ENCODE measurements at regions of chr16 and their contacts with region 1.

Region 1: GRCh38 chr16:67561824-67562525 is 351 bp upstream of the CTCF start:
- DNase-seq: peak; percentile 98
- H3K4me3 Mint-ChIP-seq: peak overlapping the region; percentile 88
- H3K27ac Mint-ChIP-seq: peak overlapping the region; percentile 94
- H3K4me1 Mint-ChIP-seq: peaks cover 40% of the 10 kb centered on the region
- H3K27me3 Mint-ChIP-seq: no peaks in the 10 kb centered on the region

Region 2: DNA sequence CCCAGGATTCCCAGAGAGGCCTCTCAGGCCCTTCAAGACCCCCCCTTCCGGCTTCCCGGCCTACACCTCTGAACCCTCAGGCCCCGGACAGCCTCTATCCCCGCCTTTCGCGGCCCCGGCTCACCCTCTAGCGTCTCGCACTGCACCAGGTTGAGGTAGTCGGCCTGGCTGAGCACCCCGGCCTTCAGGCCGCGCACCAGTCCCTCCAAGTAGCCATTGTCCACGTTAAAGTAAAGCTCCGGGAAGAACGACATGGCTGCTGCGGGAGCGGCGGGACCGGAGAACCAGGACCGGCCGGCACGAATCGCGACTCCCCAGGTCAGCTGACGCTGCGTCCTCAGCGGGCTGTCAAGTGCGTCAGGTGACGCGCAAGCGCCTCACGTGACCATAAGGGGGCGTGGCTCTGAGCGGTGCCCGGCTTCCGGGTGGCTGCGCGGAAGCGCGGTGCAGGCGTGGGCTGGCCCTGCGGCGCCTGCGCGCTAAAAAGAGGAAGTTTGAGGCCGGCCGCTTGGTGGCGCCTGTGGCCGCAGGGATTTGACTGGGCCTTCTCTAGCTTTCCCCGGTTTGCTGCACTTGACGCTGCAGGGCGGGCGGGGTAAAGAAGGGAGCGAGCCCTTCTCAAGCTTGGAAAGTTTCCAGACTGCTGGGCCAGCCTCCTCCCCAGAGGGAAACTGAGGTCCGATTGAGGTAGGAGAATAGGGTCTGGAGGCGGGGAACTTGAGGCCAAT is 81.0 kb before region 1 on chr16 and contains the start of gene ATP6V0D1:
- intact Hi-C with region 1: loop called (anchors 1 kb)
- DNase-seq: peak; percentile 99
- H3K4me3 Mint-ChIP-seq: peak within 1 kb of the TSS; percentile 89
- H3K27ac Mint-ChIP-seq: peak within 1 kb of the TSS; percentile 97
- H3K4me1 Mint-ChIP-seq: peaks cover 17% of the 10 kb centered on the region
- H3K27me3 Mint-ChIP-seq: no peaks in the 10 kb centered on the region
- total RNA-seq, gene ATP6V0D1: 37.7 and 41.5 TPM in 2 replicates

Region 3: GRCh38 chr16:67595033-67595355 is 33.0 kb after region 1 on chr16:
- intact Hi-C with region 1: loop called (anchors 5 kb)
- DNase-seq: no peak
- H3K4me3 Mint-ChIP-seq: no peak overlapping the region
- H3K27ac Mint-ChIP-seq: peak overlapping the region; percentile 61
- H3K4me1 Mint-ChIP-seq: peaks cover 31% of the 10 kb centered on the region
- H3K27me3 Mint-ChIP-seq: no peaks in the 10 kb centered on the region

Region 4: GRCh38 chr16:67660564-67661028 is 98.6 kb after region 1 on chr16 and contains the start of gene PARD6A:
- intact Hi-C with region 1: loop called (anchors 1 kb)
- DNase-seq: peak; percentile 96
- H3K4me3 Mint-ChIP-seq: peak within 1 kb of the TSS; percentile 92
- H3K27ac Mint-ChIP-seq: peak within 1 kb of the TSS; percentile 97
- H3K4me1 Mint-ChIP-seq: peaks cover 20% of the 10 kb centered on the region
- H3K27me3 Mint-ChIP-seq: no peaks in the 10 kb centered on the region
- total RNA-seq, gene PARD6A: 13.4 and 16.1 TPM in 2 replicates

Region 5: DNA sequence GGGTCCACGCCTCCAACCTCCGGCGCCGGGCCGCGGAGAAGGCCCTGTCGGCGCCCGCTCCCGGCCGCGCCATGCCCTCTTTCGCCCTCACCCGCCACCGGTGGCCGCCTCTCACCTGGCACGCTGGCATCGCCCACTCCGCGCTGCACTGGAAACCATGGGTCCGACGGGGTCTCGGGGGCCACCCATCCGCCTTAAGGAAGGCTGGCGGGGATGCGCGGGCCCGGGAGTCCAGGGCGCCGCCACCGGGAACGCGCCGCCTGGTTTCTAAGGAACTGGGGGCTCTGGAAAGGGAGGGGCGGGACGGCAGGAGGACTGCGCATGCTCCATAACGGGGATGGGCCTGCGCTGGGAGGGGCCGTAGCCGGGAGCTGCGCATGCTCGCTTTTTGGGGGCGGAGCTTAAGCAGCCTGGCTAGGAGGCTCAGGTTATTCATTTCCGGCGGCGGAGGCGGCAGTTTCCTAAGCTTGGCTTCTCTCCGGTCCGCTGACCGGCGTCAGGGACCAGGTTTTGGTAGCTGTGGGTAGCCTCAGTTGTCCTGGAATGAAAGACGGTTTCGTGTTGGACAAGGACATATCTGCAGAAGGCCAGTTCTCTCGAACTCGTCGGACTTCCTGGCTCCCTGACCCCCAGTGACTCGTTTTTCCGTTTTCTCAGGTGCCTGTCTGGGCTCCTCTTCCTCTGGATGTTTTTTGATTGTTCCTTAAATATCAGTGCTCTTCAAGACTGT is 157.2 kb after region 1 on chr16 and contains the start of gene GFOD2:
- intact Hi-C with region 1: loop called (anchors 1 kb)
- DNase-seq: peak; percentile 97
- H3K4me3 Mint-ChIP-seq: peak within 1 kb of the TSS; percentile 96
- H3K27ac Mint-ChIP-seq: peak within 1 kb of the TSS; percentile 94
- H3K4me1 Mint-ChIP-seq: peaks cover 33% of the 10 kb centered on the region
- H3K27me3 Mint-ChIP-seq: no peaks in the 10 kb centered on the region
- total RNA-seq, gene GFOD2: 19.6 and 20.3 TPM in 2 replicates

Region 6: GRCh38 chr16:68085259-68086071 is 523.5 kb after region 1 on chr16 and contains the start of gene NFATC3:
- intact Hi-C with region 1: loop called (anchors 1 kb)
- DNase-seq: peak; percentile 97
- H3K4me3 Mint-ChIP-seq: peak within 1 kb of the TSS; percentile 95
- H3K27ac Mint-ChIP-seq: peak within 1 kb of the TSS; percentile 96
- H3K4me1 Mint-ChIP-seq: peaks cover 73% of the 10 kb centered on the region
- H3K27me3 Mint-ChIP-seq: no peaks in the 10 kb centered on the region
- total RNA-seq, gene NFATC3: 152 and 157 TPM in 2 replicates

Measured in activated T-helper 1 cell treated with anti-CD3 and anti-CD28 coated beads, Interleukin-12 subunit alpha, Interleukin-12 subunit beta, Interleukin-2, Interleukin-4 antibody, amounts not matched to agents 30 ng/mL and 10 ng/mL and 1 ng/mL, durations not matched to agents 14 hours and 24 hours and 36 hours (primary cell).